ENCODE measurements at regions of chr12 and their contacts with region 1.

Region 1: DNA sequence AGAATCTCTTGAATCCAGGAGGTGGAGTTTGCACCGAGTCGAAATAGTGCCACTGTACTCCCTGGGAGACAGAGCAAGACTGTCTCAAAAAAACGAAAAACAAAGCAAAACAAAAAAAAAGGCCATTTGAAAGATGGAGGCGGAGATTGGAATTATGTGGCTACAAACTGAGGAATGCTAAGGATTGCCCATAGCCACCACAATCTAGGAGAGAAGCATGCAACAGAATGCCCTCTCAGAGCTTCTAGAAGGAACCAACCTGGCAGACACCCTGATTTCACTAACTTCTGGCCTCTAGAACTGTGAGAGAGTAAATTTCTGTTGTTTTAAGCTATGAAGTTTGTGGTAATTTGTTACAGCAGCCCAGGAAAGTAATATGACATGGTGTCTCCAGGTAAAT is 50.1 kb upstream of the LIMA1 start:
- DNase-seq: no peak
- ATAC-seq: no peak
- H3K4me3 ChIP-seq: no peak overlapping the region
- H3K27ac ChIP-seq: no peak overlapping the region
- H3K4me1 ChIP-seq: no peaks in the 10 kb centered on the region
- H3K27me3 ChIP-seq: no peaks in the 10 kb centered on the region
- CTCF ChIP-seq: no peak

Region 2: DNA sequence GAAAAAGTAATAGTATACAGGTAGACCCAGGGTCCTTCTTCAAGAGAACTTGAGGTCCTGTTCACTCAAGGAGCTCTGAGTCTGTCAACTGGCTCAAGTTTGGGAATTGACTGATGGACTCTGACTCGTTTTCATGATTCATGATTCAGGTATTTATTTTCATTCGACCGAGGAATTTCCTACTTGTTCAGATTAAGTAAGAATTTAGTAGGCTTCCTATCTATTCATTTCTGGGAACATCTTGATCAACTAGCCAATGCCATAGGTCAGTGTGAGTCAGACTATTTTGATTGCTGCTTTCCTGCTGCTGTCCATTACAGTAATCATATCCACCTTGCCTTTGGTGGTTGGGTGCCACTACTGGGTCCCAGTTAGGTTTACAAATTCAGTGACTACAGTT is 56.8 kb after region 1 on chr12:
- CTCF ChIA-PET with region 1: no interaction called
- POLR2A ChIA-PET with region 1: no interaction called
- in situ Hi-C with region 1: no loop called
- intact Hi-C with region 1: loop called (anchors 10 kb)
- DNase-seq: no peak
- ATAC-seq: peak; percentile 63
- H3K4me3 ChIP-seq: no peak overlapping the region
- H3K27ac ChIP-seq: 0 out of 2 replicates have a peak overlapping the region, but pooled peaks have one; percentile 29
- H3K4me1 ChIP-seq: peaks cover 14% of the 10 kb centered on the region
- H3K27me3 ChIP-seq: no peaks in the 10 kb centered on the region
- CTCF ChIP-seq: no peak

Region 3: DNA sequence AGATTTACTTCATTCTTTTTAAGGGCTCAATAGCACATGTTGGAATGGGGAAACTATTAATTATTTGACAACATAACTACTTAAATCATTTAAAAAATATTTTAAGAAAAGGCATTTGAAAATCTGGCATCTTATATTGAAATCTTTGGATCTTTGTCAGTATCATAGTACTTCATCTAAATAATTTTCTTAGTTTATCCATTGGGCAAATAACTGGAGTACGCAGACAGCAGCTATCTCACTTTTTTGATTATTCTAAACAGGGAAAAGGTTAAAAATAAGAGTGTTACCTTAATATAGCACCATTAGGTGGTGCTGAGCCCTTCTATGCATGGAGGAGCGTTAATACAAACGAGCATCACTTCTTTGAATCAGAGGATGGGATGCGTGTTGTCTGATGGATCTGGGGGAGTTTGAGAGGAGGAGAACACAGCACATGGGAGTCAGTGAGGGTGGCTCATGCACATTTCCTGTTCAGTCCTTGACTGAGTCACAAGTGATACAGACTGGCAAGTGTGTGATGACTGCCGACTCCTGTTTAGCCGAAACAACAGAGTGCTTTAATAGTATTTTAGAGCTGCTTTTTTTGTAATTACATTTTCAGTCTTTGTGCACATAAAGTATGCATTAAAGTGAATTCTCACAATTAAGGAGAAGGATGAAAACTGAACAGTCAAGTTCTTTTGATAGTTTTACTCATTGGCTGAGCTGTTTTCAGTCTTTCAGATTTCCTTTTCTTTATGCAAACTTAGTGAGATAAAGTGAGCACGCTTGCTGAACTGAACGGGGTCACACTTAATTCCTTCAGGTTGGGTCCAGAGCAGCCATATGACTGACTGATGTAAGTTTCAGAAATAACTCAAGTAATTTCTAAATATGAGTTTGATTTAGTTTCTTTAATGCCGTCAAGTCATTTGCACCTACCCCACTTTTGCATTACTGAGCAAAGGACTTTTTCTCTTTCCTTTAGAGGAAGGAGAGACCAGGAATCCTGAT is 264.1 kb after region 1 on chr12:
- CTCF ChIA-PET with region 1: no interaction called
- POLR2A ChIA-PET with region 1: no interaction called
- in situ Hi-C with region 1: no loop called
- intact Hi-C with region 1: no loop called
- DNase-seq: peak; percentile 83
- ATAC-seq: peak; percentile 95
- H3K4me3 ChIP-seq: peak overlapping the region; percentile 11 to 38; a peak in 3 of 4 replicates
- H3K27ac ChIP-seq: peak overlapping the region; percentile 93
- H3K4me1 ChIP-seq: peaks cover 33% of the 10 kb centered on the region
- H3K27me3 ChIP-seq: no peaks in the 10 kb centered on the region
- CTCF ChIP-seq: peak; percentile 51